HAP-1 (cell line): ENCODE measurements at regions of chr10 and their contacts with region 1.

Region 1: DNA sequence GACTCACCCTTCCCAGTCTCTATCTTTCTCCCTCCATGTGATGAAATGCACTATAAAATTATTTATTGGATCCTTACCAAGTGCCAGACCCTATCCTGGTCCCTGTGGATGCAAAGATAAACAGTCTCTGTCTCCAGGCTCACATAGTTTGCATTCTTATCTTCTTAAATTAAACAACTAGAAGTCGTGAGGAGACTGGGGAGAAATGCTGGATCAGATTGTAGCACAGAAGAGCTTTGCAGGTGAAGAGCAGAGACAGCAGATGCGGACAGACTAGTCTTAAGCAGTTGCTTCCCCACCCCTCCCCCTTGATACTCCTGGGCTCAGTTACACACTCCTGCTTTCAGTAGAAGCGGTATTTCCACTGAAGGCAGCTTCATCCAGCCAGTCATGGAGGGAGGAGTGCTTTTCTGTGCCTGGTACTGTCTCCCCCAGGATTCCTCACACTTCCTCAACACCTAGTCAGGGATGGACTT is 20.8 kb upstream of the CDK1 start:
- DNase-seq: no peak
- H3K4me3 ChIP-seq: no peak overlapping the region
- H3K4me1 ChIP-seq: no peaks in the 10 kb centered on the region
- H3K27me3 ChIP-seq: no peaks in the 10 kb centered on the region; the same call in 1 of the 2 replicates

Region 2: GRCh38 chr10:60480865-60481563 is 276.4 kb before region 1 on chr10:
- in situ Hi-C with region 1: loop called (anchors 25 kb)
- DNase-seq: no peak
- H3K4me3 ChIP-seq: no peak overlapping the region
- H3K4me1 ChIP-seq: peaks cover 50% of the 10 kb centered on the region
- H3K27me3 ChIP-seq: no peaks in the 10 kb centered on the region

Region 3: GRCh38 chr10:60986791-60987190 is 229.3 kb after region 1 on chr10:
- in situ Hi-C with region 1: no loop called
- DNase-seq: no peak
- H3K4me3 ChIP-seq: no peak overlapping the region
- H3K4me1 ChIP-seq: no peaks in the 10 kb centered on the region
- H3K27me3 ChIP-seq: no peaks in the 10 kb centered on the region